Activated naive CD4-positive, alpha-beta T cell treated with anti-CD3 and anti-CD28 coated beads for 36 hours (primary cell): ENCODE measurements at regions of chr15 and their contacts with region 1.

Region 1: DNA sequence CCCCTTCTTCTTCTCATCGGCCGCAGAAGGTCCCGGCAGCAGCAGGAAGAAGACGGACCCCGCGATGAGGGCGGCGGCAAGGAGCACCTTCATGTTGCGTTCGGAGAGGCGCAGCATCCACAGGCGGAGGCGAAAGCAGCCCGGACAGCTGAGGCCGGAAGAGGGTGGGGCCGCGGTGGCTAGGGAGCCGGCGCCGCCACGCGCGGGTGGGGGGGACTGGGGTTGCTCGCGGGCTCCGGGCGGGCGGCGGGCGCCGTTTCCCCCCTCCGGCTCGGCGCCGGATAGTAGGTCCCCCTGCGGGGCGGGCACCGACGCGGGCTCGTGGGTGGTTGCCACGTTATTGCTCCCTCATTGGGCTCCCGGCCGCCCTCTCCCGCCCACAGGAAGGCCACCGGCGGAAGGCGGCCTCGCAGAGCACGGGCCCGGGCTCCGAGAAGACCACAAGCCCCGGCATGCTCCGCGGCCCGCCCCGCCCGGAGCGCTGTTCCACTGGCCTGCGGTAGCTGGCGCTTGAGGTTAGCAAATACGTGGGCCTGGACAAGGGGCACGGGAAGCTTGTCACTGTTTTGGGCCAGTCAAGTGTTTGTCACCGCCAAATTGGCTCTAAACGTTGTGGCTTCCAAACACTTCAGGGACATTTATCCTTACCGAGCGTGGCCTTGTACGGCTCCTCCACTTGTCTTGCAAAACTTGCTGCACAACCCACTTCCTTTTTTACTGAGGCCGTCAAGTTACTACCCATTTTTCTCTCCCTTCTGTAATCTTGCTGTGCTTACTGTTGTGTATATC is at the start of gene PPIB:
- DNase-seq: peak; percentile 98
- H3K4me3 Mint-ChIP-seq: peak within 1 kb of the TSS; percentile 80
- H3K27ac Mint-ChIP-seq: peak within 1 kb of the TSS; percentile 86
- H3K4me1 Mint-ChIP-seq: peaks cover 42% of the 10 kb centered on the region
- H3K27me3 Mint-ChIP-seq: no peaks in the 10 kb centered on the region
- total RNA-seq, gene PPIB: 187 to 202 TPM

Region 2: DNA sequence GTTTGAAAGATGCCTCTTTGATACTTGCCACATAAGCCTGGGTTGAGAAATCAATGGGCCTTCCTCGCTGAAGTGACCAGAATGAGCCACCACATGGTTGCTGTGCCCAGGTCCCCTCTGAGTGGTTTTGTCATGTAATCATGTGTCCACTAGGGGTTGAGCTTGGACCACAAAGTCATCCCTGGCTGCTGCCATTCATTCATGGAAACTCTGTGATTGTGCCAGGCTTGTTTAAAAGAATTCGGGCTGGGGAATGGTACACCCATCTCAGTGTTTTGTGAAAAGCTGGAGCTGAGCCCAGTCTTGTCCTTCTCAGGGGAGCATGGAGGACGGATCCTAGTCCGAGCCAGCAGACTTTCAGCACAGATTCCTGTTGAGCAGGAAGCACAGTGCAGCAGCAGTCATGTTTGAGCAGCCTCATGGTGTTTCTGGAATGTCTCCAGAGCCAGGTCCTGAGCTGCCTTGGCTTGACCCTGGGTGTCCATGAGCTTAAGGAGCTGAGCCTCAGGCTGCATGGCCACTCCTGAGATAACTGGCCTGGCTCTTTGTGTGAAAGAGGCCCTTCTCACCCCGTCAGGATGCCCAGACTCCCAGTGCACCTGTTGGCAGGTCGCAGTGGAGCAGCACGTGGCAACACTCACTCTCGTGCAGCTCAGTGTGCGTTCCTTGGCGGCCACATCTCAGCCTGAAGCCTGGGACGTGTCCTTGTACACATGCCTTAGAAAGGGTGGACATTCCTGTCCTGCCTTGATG is 1380.8 kb before region 1 on chr15:
- CTCF ChIA-PET with region 1: no interaction called
- intact Hi-C with region 1: no loop called
- DNase-seq: peak; percentile 25
- H3K4me3 Mint-ChIP-seq: no peak overlapping the region
- H3K27ac Mint-ChIP-seq: no peak overlapping the region
- H3K4me1 Mint-ChIP-seq: no peaks in the 10 kb centered on the region
- H3K27me3 Mint-ChIP-seq: no peaks in the 10 kb centered on the region

Region 3: GRCh38 chr15:64093627-64094417 is 69.2 kb before region 1 on chr15 and contains the start of gene CIAO2A:
- CTCF ChIA-PET with region 1: interaction called, 3 read pairs
- intact Hi-C with region 1: loop called (anchors 1 kb)
- DNase-seq: peak; percentile 99
- H3K4me3 Mint-ChIP-seq: peak within 1 kb of the TSS; percentile 98
- H3K27ac Mint-ChIP-seq: peak within 1 kb of the TSS; percentile 97
- H3K4me1 Mint-ChIP-seq: peaks cover 62% of the 10 kb centered on the region
- H3K27me3 Mint-ChIP-seq: no peaks in the 10 kb centered on the region
- total RNA-seq, gene CIAO2A: 105 TPM

Region 4: DNA sequence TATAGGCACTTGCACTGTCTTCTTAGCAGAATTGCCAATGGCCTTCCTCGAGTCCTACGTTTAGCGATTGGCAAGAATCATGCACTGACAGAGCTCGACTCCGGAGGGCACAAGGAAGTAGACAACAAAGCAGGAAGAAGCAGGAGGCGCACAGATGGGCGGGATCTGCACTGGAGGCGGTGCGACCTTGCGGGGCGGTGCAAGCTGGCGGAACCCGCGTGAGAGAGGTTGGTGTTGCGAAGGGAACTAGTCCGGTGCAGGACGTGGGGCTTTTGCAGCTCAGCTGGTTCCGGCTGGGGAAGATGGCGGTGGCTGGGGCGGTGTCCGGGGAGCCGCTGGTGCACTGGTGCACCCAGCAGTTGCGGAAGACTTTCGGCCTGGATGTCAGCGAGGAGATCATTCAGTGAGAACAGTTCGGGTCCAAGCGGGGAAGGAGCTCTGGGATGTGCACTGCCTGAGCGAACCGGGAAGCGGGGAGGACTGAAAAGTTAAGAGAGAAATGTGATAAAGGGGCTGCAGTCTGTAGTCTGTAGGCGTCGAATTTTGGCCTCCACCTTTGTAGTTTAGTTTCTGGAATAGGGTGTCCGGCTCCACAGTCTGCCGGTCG is 224.6 kb after region 1 on chr15 and contains the start of gene TRIP4:
- CTCF ChIA-PET with region 1: no interaction called
- intact Hi-C with region 1: loop called (anchors 1 kb)
- DNase-seq: peak; percentile 98
- H3K4me3 Mint-ChIP-seq: peak within 1 kb of the TSS; percentile 94
- H3K27ac Mint-ChIP-seq: peak within 1 kb of the TSS; percentile 78
- H3K4me1 Mint-ChIP-seq: peaks cover 15% of the 10 kb centered on the region
- H3K27me3 Mint-ChIP-seq: no peaks in the 10 kb centered on the region
- total RNA-seq, gene TRIP4: 13.7 to 14.5 TPM

Region 5: DNA sequence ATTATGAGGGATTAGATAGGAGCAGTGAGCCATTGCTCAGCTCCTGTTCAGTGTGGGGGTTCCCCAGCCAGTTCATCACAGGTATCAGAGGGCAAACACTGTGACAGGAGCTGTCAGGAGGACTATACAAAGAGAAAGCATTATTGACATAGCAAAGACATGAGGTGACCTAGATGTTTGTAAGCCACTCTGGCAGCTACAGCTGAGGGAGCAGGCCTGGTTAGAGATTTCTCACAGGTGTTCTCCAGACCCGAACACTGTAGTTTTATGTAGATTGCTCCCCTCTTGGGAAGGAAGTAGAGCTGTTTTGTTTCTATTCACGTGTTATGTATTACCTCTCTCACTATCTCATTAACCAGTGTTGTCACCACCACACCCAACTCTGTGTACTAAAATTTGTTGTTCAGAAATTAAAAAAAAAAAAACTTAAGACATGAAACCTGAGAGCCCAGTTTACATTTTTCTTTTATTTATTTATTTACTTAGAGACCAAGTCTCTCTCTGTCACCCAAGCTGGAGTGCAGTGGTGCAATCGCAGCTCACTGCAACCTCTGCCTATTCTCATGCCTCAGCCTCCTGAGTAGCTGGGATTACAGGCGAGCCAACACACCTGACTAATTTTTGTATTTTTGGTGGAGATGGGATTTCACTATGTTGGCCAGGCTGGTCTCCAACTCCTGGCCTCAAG is 488.7 kb after region 1 on chr15:
- CTCF ChIA-PET with region 1: no interaction called
- intact Hi-C with region 1: loop called (anchors 2 kb)
- DNase-seq: peak; percentile 72
- H3K4me3 Mint-ChIP-seq: peak overlapping the region; percentile 7
- H3K27ac Mint-ChIP-seq: peak overlapping the region; percentile 78
- H3K4me1 Mint-ChIP-seq: peaks cover 44% of the 10 kb centered on the region
- H3K27me3 Mint-ChIP-seq: no peaks in the 10 kb centered on the region

Region 6: DNA sequence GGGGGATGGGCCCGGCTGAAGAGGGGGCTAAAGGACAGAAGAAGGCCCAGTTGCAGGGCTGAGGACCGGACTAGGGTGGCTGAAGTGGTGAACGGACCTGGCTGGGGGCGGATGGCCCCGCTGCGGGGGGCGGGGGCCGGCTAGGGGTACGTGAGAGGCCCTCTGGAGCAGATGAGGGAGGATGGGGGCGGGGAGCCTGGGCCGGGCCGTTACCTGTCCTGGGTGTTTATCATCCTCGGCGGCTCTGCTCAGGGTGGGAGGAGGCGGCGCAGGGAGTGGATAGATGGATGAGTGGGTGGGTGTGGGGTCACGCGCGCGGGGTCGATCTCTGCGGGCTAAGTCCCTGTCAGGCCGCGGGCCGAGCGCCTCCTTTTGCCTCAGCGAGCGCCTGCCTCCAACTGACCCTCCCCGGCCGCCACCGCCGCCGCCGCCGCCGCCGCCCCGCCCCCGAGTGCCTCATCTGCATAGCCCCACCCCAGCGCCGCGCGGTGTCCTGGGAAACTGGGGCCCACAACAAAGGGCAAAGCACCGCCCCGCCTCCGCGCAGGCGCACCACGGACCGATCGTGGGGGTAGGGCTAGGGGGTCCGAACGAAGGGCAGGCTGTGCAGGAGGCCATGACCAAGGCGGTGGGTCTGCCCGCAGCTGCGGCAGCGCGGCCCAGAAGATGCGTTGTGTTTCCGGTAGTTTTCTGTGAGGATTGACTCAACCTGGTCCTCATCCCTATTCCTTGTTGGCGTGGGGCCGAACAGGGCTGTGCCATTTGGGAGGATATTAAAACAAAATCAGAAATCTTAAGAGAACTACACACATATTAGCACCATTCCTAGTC is 540.0 kb after region 1 on chr15:
- CTCF ChIA-PET with region 1: no interaction called
- intact Hi-C with region 1: loop called (anchors 1 kb)
- DNase-seq: peak; percentile 97
- H3K4me3 Mint-ChIP-seq: peak overlapping the region; percentile 84
- H3K27ac Mint-ChIP-seq: peak overlapping the region; percentile 81
- H3K4me1 Mint-ChIP-seq: peaks cover 50% of the 10 kb centered on the region
- H3K27me3 Mint-ChIP-seq: no peaks in the 10 kb centered on the region